CD4-positive, alpha-beta T cell (primary cell): ENCODE measurements at regions of chr3 and their contacts with region 1.

Region 1: GRCh38 chr3:148943506-148944205 is 47.7 kb upstream of the GYG1 start:
- DNase-seq: peak in 4 of 14 experiments; percentile 10 to 68 (median 63)
- ATAC-seq: peak; percentile 84
- H3K4me3 ChIP-seq: no peak overlapping the region
- H3K4me3 Mint-ChIP-seq: no peak overlapping the region
- H3K27ac ChIP-seq: no peak overlapping the region
- H3K27ac Mint-ChIP-seq: no peak overlapping the region
- H3K4me1 ChIP-seq: no peaks in the 10 kb centered on the region
- H3K4me1 Mint-ChIP-seq: no peaks in the 10 kb centered on the region
- H3K27me3 ChIP-seq: no peaks in the 10 kb centered on the region
- H3K27me3 Mint-ChIP-seq: peaks cover 11% of the 10 kb centered on the region
- CTCF ChIP-seq: peak; percentile 73

Region 2: DNA sequence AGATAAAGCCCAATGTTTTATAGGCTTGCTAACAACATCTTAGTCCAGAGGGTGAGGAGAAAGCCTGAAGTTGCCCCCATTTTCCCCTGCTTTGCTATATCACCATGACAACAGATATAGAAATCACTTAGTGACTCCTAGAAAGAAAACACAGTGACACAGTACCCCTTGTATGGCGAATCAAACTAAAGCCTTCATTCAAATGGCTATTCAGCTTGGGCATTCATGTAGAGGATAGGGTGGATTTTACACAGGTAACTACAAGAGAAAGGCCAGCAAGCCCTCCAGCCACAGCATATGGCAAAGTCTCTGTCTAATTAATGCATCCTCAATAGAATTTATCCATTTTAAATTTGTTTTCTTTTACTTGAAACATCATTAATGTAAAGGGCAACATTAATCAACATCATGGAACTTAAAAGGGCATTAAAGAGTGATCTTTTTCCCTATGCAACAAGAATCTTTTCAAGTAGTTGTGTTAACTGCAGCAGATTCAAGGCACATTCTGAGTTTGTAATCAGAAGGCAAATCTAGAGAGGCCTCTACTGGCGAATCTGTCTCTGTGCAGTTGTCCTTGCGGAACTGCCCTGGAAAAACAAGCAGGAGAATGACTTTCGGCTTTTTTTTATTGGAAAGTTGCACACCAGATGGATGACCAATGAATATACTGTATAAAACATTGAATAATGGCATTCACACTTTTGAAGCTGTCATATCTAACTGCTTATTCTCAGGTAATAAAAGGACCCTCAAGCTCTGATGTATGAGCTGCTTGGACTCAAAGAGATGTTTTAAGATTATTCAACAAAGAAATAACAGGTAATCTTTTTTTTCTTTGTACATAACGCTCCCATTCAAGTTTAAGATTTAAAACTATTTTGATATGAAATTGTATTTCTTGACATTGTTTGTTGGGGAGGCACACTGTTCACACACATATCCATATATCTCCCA is 867.6 kb before region 1 on chr3:
- CTCF ChIA-PET with region 1: no interaction called
- POLR2A ChIA-PET with region 1: no interaction called
- intact Hi-C with region 1: no loop called
- DNase-seq: no peak
- ATAC-seq: no peak
- H3K4me3 ChIP-seq: no peak overlapping the region
- H3K4me3 Mint-ChIP-seq: no peak overlapping the region
- H3K27ac ChIP-seq: no peak overlapping the region
- H3K27ac Mint-ChIP-seq: no peak overlapping the region
- H3K4me1 ChIP-seq: no peaks in the 10 kb centered on the region
- H3K4me1 Mint-ChIP-seq: no peaks in the 10 kb centered on the region
- H3K27me3 ChIP-seq: no peaks in the 10 kb centered on the region
- H3K27me3 Mint-ChIP-seq: no peaks in the 10 kb centered on the region
- CTCF ChIP-seq: no peak

Region 3: DNA sequence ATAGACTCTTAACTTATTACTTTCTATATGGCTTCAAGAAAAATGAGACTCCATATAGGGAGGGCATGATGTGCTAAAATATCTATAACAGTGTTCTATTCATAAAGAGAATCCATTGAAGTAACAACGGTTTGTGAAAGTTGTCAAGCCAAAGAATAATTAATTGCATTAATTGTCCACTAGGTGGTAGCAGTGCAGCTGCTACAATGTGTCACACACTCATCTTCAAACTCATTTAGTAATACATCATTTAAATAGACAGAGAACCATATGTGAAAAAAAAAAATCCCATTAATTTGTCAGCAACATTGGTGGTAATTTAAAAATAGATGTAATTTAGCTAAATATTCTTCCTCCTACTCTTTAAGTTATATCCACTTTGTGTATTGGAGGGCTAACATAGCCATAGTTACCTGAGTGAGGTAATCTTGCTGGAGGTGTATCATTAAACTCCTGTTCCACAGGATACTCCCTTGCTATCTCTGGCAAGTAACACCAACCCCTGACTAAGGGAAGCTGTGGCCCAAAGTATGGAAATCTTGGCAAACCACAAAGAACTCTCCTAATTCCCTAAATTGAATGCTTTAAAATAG is 82.3 kb before region 1 on chr3:
- CTCF ChIA-PET with region 1: interaction called, 3 read pairs
- POLR2A ChIA-PET with region 1: no interaction called
- intact Hi-C with region 1: loop called (anchors 1 to 2 kb)
- DNase-seq: peak in 3 of 14 experiments; percentile 27 to 54 (median 51)
- ATAC-seq: no peak
- H3K4me3 ChIP-seq: no peak overlapping the region
- H3K4me3 Mint-ChIP-seq: no peak overlapping the region
- H3K27ac ChIP-seq: no peak overlapping the region
- H3K27ac Mint-ChIP-seq: no peak overlapping the region
- H3K4me1 ChIP-seq: no peaks in the 10 kb centered on the region
- H3K4me1 Mint-ChIP-seq: no peaks in the 10 kb centered on the region
- H3K27me3 ChIP-seq: peaks cover 5 to 12% of the 10 kb centered on the region in 2 experiments
- H3K27me3 Mint-ChIP-seq: peaks cover 18% of the 10 kb centered on the region
- CTCF ChIP-seq: peak; percentile 74